PC-3 (cell line): ENCODE measurements at regions of chr7 and their contacts with region 1.

Region 1: GRCh38 chr7:98400542-98401340 is at the start of gene BAIAP2L1:
- DNase-seq: peak; percentile 92
- ATAC-seq: peak; percentile 89
- H3K4me3 ChIP-seq: peak within 1 kb of the TSS; percentile 91
- H3K27ac ChIP-seq: peak within 1 kb of the TSS; percentile 81
- H3K4me1 ChIP-seq: peaks cover 9% of the 10 kb centered on the region
- H3K27me3 ChIP-seq: no peaks in the 10 kb centered on the region
- CTCF ChIP-seq: no peak
- total RNA-seq, gene BAIAP2L1: 18.9 and 30.5 TPM in 2 replicates

Region 2: DNA sequence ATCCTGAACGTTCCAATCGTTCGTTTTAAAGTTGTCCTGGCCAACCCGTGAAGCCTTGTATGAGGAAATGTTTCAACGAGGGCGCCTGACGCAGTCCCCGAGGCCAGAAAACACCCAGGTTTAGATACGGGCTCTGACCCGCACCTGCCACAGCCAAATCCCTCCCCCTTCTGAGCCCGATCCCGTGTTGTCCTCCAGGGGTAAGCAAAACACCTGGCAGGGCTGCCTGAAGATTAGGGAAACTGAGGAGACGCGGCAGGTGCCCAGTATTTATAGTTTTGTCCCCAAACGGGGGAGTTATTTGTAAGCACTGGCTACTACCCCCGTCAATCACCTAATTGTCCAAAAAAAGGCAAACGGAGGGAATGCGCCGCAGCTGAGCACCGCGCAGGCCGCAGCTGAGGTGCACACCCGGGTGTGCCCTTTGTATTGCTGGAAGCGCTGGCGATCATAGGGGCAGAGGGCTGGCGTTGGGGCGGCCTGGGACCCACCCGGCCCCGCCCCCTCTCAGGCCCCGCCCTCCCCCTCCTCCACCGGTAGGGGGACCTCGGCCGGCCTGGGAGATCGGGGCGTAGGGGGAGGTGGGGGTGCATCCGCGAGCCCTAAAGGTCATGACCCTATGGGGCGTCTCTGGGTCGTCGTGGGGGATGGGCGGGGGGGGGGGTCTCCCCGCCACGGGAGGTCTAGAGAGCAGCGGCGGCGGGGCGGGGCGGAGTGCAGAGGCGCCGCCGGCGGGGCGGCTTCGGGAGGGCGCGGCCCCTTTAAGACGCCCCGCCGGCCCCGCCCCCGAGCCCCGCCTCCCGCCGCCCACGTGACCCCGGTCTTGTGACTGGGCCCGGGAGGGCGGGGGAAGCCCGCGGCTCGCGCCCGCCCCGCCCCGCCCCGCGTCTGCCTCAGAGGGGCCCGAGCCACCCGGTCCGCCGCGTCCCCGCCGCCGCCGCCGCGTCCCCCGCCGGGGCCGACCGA is 119.7 kb before region 1 on chr7 and contains the start of gene BRI3:
- CTCF ChIA-PET with region 1: no interaction called
- POLR2A ChIA-PET with region 1: interaction called, 16 read pairs
- intact Hi-C with region 1: no loop called
- DNase-seq: peak; percentile 85
- ATAC-seq: peak; percentile 48
- H3K4me3 ChIP-seq: peak within 1 kb of the TSS; percentile 97
- H3K27ac ChIP-seq: peak within 1 kb of the TSS; percentile 84
- H3K4me1 ChIP-seq: peaks cover 37% of the 10 kb centered on the region
- H3K27me3 ChIP-seq: no peaks in the 10 kb centered on the region
- CTCF ChIP-seq: no peak
- total RNA-seq, gene BRI3: 52.5 and 55.0 TPM in 2 replicates

Region 3: GRCh38 chr7:98294796-98295382 is 105.9 kb before region 1 on chr7:
- CTCF ChIA-PET with region 1: interaction called, 4 read pairs
- POLR2A ChIA-PET with region 1: no interaction called
- intact Hi-C with region 1: loop called (anchors 2 kb)
- DNase-seq: peak; percentile 73
- ATAC-seq: peak; percentile 93
- H3K4me3 ChIP-seq: no peak overlapping the region
- H3K27ac ChIP-seq: no peak overlapping the region
- H3K4me1 ChIP-seq: no peaks in the 10 kb centered on the region
- H3K27me3 ChIP-seq: no peaks in the 10 kb centered on the region
- CTCF ChIP-seq: peak; percentile 90

Region 4: GRCh38 chr7:98341106-98341505 is 59.6 kb before region 1 on chr7:
- CTCF ChIA-PET with region 1: no interaction called
- POLR2A ChIA-PET with region 1: interaction called, 14 read pairs
- intact Hi-C with region 1: no loop called
- DNase-seq: no peak
- ATAC-seq: no peak
- H3K4me3 ChIP-seq: no peak overlapping the region
- H3K27ac ChIP-seq: no peak overlapping the region
- H3K4me1 ChIP-seq: no peaks in the 10 kb centered on the region
- H3K27me3 ChIP-seq: no peaks in the 10 kb centered on the region
- CTCF ChIP-seq: no peak

Region 5: GRCh38 chr7:98354511-98355257 is 46.1 kb before region 1 on chr7:
- CTCF ChIA-PET with region 1: interaction called, 12 read pairs
- POLR2A ChIA-PET with region 1: interaction called, 5 read pairs
- intact Hi-C with region 1: loop called (anchors 1 kb)
- DNase-seq: peak; percentile 96
- ATAC-seq: peak; percentile 85
- H3K4me3 ChIP-seq: peak overlapping the region; percentile 63
- H3K27ac ChIP-seq: peak overlapping the region; percentile 99
- H3K4me1 ChIP-seq: peaks cover 48% of the 10 kb centered on the region
- H3K27me3 ChIP-seq: no peaks in the 10 kb centered on the region
- CTCF ChIP-seq: no peak

Region 6: DNA sequence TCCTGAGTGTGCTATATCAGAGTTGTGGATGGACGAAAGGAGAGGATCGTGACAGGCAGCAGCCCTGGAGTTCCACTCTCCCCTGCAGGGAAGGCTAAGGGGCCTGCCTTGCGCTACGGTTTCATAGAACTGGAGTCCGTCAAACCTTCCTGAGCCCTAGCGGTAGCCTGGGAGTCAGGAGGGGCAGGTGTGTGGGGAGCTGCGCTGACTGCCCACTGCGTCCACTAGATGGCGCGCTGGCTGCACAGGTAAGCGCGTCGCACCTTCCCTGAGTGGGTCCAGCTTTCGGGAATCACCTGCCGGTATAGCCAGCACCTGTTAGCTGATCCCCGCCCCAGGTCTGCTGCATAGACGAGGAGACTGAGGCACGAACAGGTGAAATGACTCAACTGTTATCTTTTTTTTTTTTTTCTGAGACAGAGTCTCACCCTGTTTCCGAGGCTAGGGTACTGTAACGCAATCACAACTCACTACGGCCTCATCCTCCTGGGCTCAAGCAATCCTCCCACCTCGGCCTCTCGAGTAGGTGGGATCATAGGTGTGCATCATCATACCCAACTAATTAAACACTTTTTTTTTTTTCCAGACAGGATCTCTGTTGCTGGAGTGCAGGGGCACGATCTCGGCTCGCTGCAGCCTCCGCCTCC is 20.3 kb after region 1 on chr7:
- CTCF ChIA-PET with region 1: interaction called, 10 read pairs
- POLR2A ChIA-PET with region 1: interaction called, 6 read pairs
- intact Hi-C with region 1: no loop called
- DNase-seq: peak; percentile 90
- ATAC-seq: peak; percentile 53
- H3K4me3 ChIP-seq: no peak overlapping the region
- H3K27ac ChIP-seq: no peak overlapping the region
- H3K4me1 ChIP-seq: peaks cover 33% of the 10 kb centered on the region
- H3K27me3 ChIP-seq: no peaks in the 10 kb centered on the region
- CTCF ChIP-seq: peak; percentile 96